A673 (cell line): ENCODE measurements at regions of chr6 and their contacts with region 1.

Region 1: GRCh38 chr6:72959821-72960220 is 265.5 kb downstream of the KHDC1L start:
- DNase-seq: no peak
- H3K4me3 ChIP-seq: no peak overlapping the region
- H3K27ac ChIP-seq: no peak overlapping the region
- H3K4me1 ChIP-seq: peaks cover 21% of the 10 kb centered on the region
- H3K27me3 ChIP-seq: no peaks in the 10 kb centered on the region
- CTCF ChIP-seq: no peak

Region 2: GRCh38 chr6:72984981-72985665 is 25.3 kb after region 1 on chr6:
- CTCF ChIA-PET with region 1: no interaction called
- POLR2A ChIA-PET with region 1: interaction called, 15 read pairs
- intact Hi-C with region 1: no loop called
- DNase-seq: no peak
- H3K4me3 ChIP-seq: no peak overlapping the region
- H3K27ac ChIP-seq: no peak overlapping the region
- H3K4me1 ChIP-seq: no peaks in the 10 kb centered on the region
- H3K27me3 ChIP-seq: no peaks in the 10 kb centered on the region
- CTCF ChIP-seq: no peak